Astrocyte of the cerebellum (primary cell): ENCODE measurements at regions of chr5 and their contacts with region 1.

Region 1: DNA sequence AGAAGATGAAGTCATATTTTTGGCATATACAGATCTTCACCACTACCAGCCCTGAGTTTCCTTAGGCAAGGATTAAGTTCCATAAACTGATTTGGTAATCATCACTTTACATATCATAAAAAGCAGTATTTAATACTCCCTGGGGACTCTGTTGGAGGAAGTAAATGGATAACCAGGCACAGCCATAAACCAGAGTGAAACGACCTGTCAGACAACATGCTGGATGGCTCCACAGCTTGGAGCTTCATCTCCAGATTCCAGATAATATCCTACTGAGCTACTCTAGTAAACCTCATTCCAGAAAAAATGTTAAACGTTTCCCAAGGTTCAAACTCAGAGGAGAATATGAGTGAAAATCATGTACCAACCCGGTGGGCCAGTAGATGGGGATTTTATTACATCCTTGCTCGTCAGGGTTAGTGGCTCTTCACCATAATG is 109.2 kb downstream of the BASP1 start:
- DNase-seq: no peak
- H3K4me3 ChIP-seq: no peak overlapping the region
- CTCF ChIP-seq: no peak

Region 2: GRCh38 chr5:17365811-17366138 is 39.2 kb after region 1 on chr5:
- in situ Hi-C with region 1: loop called (anchors 5 kb)
- DNase-seq: no peak
- H3K4me3 ChIP-seq: no peak overlapping the region
- CTCF ChIP-seq: no peak